Activated CD4-positive, alpha-beta memory T cell treated with anti-CD3 and anti-CD28 coated beads, Interleukin-2, amount 10 ng/mL, durations not matched to agents 7 days and 5 days (primary cell): ENCODE measurements at regions of chr7 and their contacts with region 1.

Region 1: GRCh38 chr7:150685219-150686029 is at the start of gene GIMAP2:
- DNase-seq: peak; percentile 33
- H3K4me3 Mint-ChIP-seq: peak within 1 kb of the TSS; percentile 100
- H3K27ac Mint-ChIP-seq: peak within 1 kb of the TSS; percentile 98
- H3K4me1 Mint-ChIP-seq: peaks cover 76% of the 10 kb centered on the region
- H3K27me3 Mint-ChIP-seq: no peaks in the 10 kb centered on the region
- total RNA-seq, gene GIMAP2: 113 to 120 TPM

Region 2: GRCh38 chr7:150620617-150621371 is 64.6 kb before region 1 on chr7:
- CTCF ChIA-PET with region 1: no interaction called
- POLR2A ChIA-PET with region 1: interaction called, 13 read pairs
- DNase-seq: no peak
- H3K4me3 Mint-ChIP-seq: no peak overlapping the region
- H3K27ac Mint-ChIP-seq: peak overlapping the region; percentile 82
- H3K4me1 Mint-ChIP-seq: peaks cover 56% of the 10 kb centered on the region
- H3K27me3 Mint-ChIP-seq: no peaks in the 10 kb centered on the region

Region 3: GRCh38 chr7:150631866-150632864 is 53.3 kb before region 1 on chr7 and contains the start of gene GIMAP6:
- CTCF ChIA-PET with region 1: interaction called, 6 read pairs
- POLR2A ChIA-PET with region 1: interaction called, 25 read pairs
- DNase-seq: peak; percentile 56
- H3K4me3 Mint-ChIP-seq: peak within 1 kb of the TSS; percentile 98
- H3K27ac Mint-ChIP-seq: peak within 1 kb of the TSS; percentile 89
- H3K4me1 Mint-ChIP-seq: peaks cover 68% of the 10 kb centered on the region
- H3K27me3 Mint-ChIP-seq: no peaks in the 10 kb centered on the region
- total RNA-seq, gene GIMAP6: 84.9 to 85.9 TPM

Region 4: GRCh38 chr7:150668472-150668911 is 16.9 kb before region 1 on chr7:
- CTCF ChIA-PET with region 1: interaction called, 15 read pairs
- POLR2A ChIA-PET with region 1: interaction called, 21 read pairs
- DNase-seq: peak; percentile 75
- H3K4me3 Mint-ChIP-seq: peak overlapping the region; percentile 41
- H3K27ac Mint-ChIP-seq: peak overlapping the region; percentile 95
- H3K4me1 Mint-ChIP-seq: peaks cover 84% of the 10 kb centered on the region
- H3K27me3 Mint-ChIP-seq: no peaks in the 10 kb centered on the region